ENCODE measurements at regions of chr2 and their contacts with region 1.

Region 1: GRCh38 chr2:8329660-8330622 is 351.9 kb upstream of the ID2 start:
- DNase-seq: no peak
- H3K4me3 ChIP-seq: peak overlapping the region in 1 of 3 donors; percentile 8
- H3K27ac ChIP-seq: no peak overlapping the region
- H3K4me1 ChIP-seq: no peaks in the 10 kb centered on the region
- H3K27me3 ChIP-seq: no peaks in the 10 kb centered on the region
- CTCF ChIP-seq: no peak
- POLR2A ChIP-seq: no peak

Region 2: GRCh38 chr2:9805435-9806326 is 1475.7 kb after region 1 on chr2:
- intact Hi-C with region 1: loop called (anchors 5 kb)
- DNase-seq: peak in 1 of 2 donors; percentile 15
- H3K4me3 ChIP-seq: no peak overlapping the region
- H3K27ac ChIP-seq: no peak overlapping the region
- H3K4me1 ChIP-seq: peaks cover 14 to 22% of the 10 kb centered on the region in 2 donors
- H3K27me3 ChIP-seq: no peaks in the 10 kb centered on the region
- CTCF ChIP-seq: no peak
- POLR2A ChIP-seq: no peak